Head of caudate nucleus (tissue), 42 donors: ENCODE measurements at regions of chr6 and their contacts with region 1.

Region 1: DNA sequence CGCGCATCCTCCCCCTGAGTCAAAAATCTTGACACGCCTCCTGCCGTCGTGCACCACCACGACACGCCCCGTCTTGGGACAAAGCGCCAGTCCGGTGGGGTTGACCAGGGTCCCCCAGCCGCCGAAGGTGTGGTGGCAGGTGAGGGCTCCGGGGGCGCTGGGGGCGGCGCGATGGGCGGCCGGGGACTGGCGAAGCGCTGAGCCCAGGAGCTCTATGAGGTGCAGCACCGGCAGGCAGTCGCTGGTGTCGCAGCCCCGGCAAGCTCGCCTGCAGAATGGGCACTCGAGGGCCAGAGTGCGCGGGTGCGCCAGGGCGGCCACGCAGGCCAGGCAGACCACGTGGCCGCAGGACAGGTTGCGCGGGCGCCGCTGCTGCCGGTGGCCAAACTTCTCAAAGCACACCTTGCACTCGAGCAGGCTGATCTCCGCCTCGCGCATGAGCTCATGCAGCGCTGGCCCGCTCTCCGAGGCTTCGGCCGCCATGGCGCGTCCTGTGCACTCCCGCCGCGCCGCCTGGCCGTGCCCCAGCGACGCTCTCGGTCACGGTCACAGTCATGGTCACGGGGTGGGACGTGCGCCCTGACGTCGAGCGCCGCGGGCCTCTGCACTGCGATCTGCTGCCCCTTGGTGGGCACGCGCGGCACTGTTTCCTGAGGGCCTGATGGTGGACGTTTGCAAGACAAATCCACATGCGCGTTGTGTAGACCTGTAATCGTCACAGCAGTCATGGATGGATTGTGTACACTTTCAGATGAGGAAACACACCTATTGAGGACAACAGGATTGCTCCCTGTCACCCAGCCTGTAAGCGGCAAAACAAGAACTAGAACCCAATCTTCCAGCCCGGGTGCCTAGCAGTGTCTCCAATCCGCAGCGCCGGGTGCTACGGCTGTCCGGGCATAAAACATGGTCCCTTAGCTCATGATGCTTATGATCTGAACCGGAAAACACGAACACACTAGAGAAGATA is at the start of gene NHLRC1:
- DNase-seq: peak; percentile 85 to 96 (median 92)

Region 2: GRCh38 chr6:17584241-17584803 is 538.1 kb before region 1 on chr6:
- intact Hi-C with region 1: loop called (anchors 10 kb)
- DNase-seq: peak in 25 of 42 donors; percentile 15 to 82 (median 48)

Region 3: GRCh38 chr6:17706580-17707370 is 415.6 kb before region 1 on chr6 and contains the start of gene NUP153:
- intact Hi-C with region 1: loop called (anchors 10 kb)
- DNase-seq: peak; percentile 97 to 100 (median 99)

Region 4: GRCh38 chr6:17719323-17720041 is 402.9 kb before region 1 on chr6:
- intact Hi-C with region 1: no loop called
- DNase-seq: no peak

Region 5: DNA sequence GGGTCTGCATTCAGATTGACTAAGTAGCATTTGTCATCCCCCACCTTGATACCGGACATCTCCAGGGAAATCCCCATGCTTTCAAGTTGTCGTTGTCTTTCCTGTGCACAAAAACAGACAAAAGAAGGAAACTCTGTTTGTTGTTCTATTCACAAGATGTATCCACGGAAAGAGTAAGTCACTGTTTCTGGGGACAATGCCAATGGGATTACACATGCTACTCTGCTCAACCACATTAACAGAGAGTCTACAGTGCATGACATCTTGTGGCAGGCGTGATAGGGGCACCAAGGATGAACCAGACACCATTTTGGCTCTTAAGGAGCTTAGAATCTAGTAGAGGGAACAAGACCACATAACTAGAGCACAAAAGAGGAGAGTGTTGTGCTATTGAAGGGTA is 291.3 kb before region 1 on chr6:
- intact Hi-C with region 1: loop called (anchors 5 kb)
- DNase-seq: peak in 12 of 42 donors; percentile 9 to 54 (median 28)

Region 6: GRCh38 chr6:17938901-17939300 is 183.5 kb before region 1 on chr6:
- intact Hi-C with region 1: no loop called
- DNase-seq: no peak